ENCODE measurements at regions of chr12 and their contacts with region 1.

Region 1: DNA sequence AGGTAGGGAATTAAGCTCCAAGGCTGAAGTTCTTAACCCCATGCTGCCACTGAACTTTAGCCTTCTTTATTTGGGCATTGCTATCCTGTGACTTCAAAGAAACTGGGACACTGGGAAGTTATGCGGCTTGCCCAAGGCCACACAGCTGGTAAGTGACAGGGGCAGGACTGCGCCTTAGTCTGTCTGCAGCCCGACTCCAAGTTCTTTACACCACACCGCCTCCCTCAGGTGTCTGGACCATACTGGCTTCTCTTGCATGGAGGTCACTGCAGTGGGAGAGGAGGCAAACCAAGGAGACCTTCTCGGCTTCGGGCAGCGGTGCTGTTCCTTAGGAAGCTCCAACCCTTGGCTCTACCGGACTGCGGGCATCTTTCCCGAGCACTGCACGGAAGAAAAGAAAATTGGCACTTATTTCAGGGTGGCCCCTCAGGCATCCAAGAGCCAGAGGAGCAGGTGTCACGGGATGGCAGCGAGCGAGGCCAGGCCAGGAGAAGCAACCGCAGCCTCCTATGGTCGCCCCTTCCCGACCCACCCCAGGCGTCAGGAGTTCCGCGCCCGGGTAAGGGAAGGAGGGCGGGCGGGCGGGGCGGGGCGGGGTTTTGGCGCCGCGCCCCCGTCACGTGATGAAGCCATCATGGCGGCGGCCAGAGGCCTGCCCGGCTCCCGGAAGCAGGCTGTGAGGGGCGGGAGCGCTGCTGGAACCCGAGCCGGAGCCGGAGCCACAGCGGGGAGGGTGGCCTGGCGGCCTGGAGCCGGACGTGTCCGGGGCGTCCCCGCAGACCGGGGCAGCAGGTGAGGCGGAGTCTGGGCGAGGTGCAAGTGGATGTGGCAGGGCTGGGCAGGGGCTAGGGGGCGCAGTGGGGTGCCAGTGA is 16.4 kb upstream of the ESPL1 start:
- DNase-seq: peak; percentile 85
- ATAC-seq: peak; percentile 81
- H3K4me3 ChIP-seq: peak overlapping the region; percentile 56 to 95 (median 88)
- H3K4me3 Mint-ChIP-seq: peak overlapping the region; percentile 99
- H3K27ac ChIP-seq: peak overlapping the region; percentile 59 to 92
- H3K27ac Mint-ChIP-seq: peak overlapping the region; percentile 96
- H3K4me1 ChIP-seq: peaks cover 44 to 52% of the 10 kb centered on the region in 2 donors
- H3K4me1 Mint-ChIP-seq: peaks cover 49% of the 10 kb centered on the region
- H3K27me3 ChIP-seq: no peaks in the 10 kb centered on the region
- H3K27me3 Mint-ChIP-seq: no peaks in the 10 kb centered on the region
- CTCF ChIP-seq: peak; percentile 42

Region 2: DNA sequence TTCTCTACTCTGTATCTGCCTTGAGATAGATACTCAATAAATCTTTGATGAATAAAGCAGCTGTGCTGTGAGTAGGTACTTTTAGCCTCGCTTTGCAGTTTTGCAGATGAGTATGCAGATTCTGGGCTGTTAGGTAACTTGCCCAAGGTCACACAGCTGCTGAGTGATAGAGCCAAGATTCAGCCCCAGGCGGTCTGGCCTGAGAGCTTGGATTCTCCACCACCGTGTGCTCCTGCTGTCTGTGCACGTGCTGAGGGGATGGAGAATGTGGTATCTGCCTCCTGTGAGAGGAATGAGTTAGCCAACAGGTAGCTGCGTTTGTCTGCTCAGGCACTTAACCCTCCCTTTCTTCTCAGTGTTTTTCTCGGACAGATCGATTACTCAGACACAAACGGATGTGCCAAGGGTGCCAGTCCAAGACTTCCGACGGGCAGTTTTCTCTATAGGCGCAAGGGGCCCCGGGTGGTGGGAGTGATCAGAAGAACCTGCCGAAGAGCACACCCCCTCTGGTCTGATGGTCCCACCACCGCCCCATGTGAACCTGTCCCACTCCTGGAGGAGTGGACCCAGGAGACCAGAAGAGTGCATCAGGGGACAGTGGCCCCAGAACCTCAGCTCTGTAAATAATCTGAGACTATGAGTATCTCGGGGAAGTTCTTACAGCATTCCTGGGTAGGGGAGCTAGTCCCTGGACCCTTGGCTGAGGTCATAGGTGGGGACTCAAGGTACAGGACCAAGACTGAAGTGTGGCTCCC is 64.4 kb before region 1 on chr12:
- CTCF ChIA-PET with region 1: no interaction called
- POLR2A ChIA-PET with region 1: no interaction called
- intact Hi-C with region 1: no loop called
- DNase-seq: no peak
- ATAC-seq: no peak
- H3K4me3 ChIP-seq: no peak overlapping the region
- H3K4me3 Mint-ChIP-seq: no peak overlapping the region
- H3K27ac ChIP-seq: no peak overlapping the region
- H3K27ac Mint-ChIP-seq: peak overlapping the region; percentile 50
- H3K4me1 ChIP-seq: peaks cover 10 to 18% of the 10 kb centered on the region in 2 donors
- H3K4me1 Mint-ChIP-seq: peaks cover 35% of the 10 kb centered on the region
- H3K27me3 ChIP-seq: no peaks in the 10 kb centered on the region
- H3K27me3 Mint-ChIP-seq: no peaks in the 10 kb centered on the region
- CTCF ChIP-seq: no peak

Region 3: DNA sequence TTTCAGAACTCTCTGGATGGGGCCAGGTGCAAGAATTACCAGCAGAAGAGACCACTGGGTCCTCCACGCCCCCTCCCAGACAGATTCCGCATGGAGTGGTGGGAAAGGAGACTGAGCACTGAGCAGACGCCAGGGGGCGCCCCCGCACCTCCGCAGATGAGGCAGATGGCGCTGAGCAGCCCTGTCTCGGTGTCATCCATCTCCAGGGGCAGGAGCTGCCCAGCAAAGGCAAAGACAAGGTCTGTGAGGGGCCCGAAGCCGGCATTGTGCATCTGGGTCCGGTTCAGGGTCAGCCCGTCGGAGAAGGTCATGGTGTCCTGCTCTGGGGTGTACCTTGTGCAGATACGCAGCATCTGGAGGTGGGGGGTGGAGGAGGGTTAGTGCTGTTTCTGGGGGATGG is 38.4 kb before region 1 on chr12:
- CTCF ChIA-PET with region 1: interaction called, 84 read pairs
- POLR2A ChIA-PET with region 1: no interaction called
- intact Hi-C with region 1: no loop called
- DNase-seq: peak; percentile 87
- ATAC-seq: peak; percentile 65
- H3K4me3 ChIP-seq: no peak overlapping the region
- H3K4me3 Mint-ChIP-seq: no peak overlapping the region
- H3K27ac ChIP-seq: no peak overlapping the region
- H3K27ac Mint-ChIP-seq: peak overlapping the region; percentile 46
- H3K4me1 ChIP-seq: peaks cover 57 to 65% of the 10 kb centered on the region in 2 donors
- H3K4me1 Mint-ChIP-seq: peaks cover 70% of the 10 kb centered on the region
- H3K27me3 ChIP-seq: no peaks in the 10 kb centered on the region
- H3K27me3 Mint-ChIP-seq: no peaks in the 10 kb centered on the region
- CTCF ChIP-seq: peak; percentile 97

Region 4: DNA sequence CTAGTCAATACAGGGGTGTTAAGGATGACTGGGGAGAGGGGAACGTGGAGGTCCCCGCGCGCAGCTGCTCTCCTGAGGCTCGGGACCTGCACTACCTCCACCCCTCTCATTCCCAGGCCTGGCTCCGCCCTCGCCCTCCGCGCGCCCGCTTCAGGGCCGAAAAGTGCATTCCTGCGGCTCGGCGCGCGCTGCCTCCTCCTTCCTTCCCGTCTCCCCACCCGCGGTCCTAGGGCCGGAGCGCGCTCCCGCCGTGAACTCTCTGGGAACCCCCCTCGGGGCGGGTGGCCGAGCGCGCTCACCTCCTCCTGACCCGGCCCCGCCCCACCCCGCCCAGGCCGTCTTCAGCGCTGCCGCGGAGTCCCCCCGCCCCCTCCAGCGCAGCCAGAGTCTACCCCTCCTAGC is 30.9 kb before region 1 on chr12:
- CTCF ChIA-PET with region 1: interaction called, 84 read pairs
- POLR2A ChIA-PET with region 1: interaction called, 7 read pairs
- intact Hi-C with region 1: loop called (anchors 1 kb)
- DNase-seq: peak; percentile 92
- ATAC-seq: peak; percentile 76
- H3K4me3 ChIP-seq: peak overlapping the region; percentile 63 to 100 (median 90)
- H3K4me3 Mint-ChIP-seq: peak overlapping the region; percentile 97
- H3K27ac ChIP-seq: peak overlapping the region; percentile 93 to 95
- H3K27ac Mint-ChIP-seq: peak overlapping the region; percentile 98
- H3K4me1 ChIP-seq: peaks cover 39 to 56% of the 10 kb centered on the region in 2 donors
- H3K4me1 Mint-ChIP-seq: peaks cover 53% of the 10 kb centered on the region
- H3K27me3 ChIP-seq: no peaks in the 10 kb centered on the region
- H3K27me3 Mint-ChIP-seq: no peaks in the 10 kb centered on the region
- CTCF ChIP-seq: no peak

Region 5: GRCh38 chr12:53287741-53288216 is 36.1 kb after region 1 on chr12:
- CTCF ChIA-PET with region 1: interaction called, 14 read pairs
- POLR2A ChIA-PET with region 1: no interaction called
- intact Hi-C with region 1: no loop called
- DNase-seq: peak; percentile 85
- ATAC-seq: peak; percentile 96
- H3K4me3 ChIP-seq: no peak overlapping the region
- H3K4me3 Mint-ChIP-seq: no peak overlapping the region
- H3K27ac ChIP-seq: no peak overlapping the region
- H3K27ac Mint-ChIP-seq: peak overlapping the region; percentile 28
- H3K4me1 ChIP-seq: no peaks in the 10 kb centered on the region
- H3K4me1 Mint-ChIP-seq: peaks cover 5% of the 10 kb centered on the region
- H3K27me3 ChIP-seq: no peaks in the 10 kb centered on the region
- H3K27me3 Mint-ChIP-seq: no peaks in the 10 kb centered on the region
- CTCF ChIP-seq: peak; percentile 82

Region 6: GRCh38 chr12:53295070-53295890 is 43.6 kb after region 1 on chr12 and contains the start of gene PFDN5:
- CTCF ChIA-PET with region 1: no interaction called
- POLR2A ChIA-PET with region 1: no interaction called
- intact Hi-C with region 1: loop called (anchors 1 kb)
- DNase-seq: peak; percentile 92
- ATAC-seq: peak; percentile 90
- H3K4me3 ChIP-seq: peak within 1 kb of the TSS; percentile 64 to 96 (median 82)
- H3K4me3 Mint-ChIP-seq: peak within 1 kb of the TSS; percentile 100
- H3K27ac ChIP-seq: peak within 1 kb of the TSS; percentile 69 to 86
- H3K27ac Mint-ChIP-seq: peak within 1 kb of the TSS; percentile 99
- H3K4me1 ChIP-seq: peaks cover 26 to 39% of the 10 kb centered on the region in 2 donors
- H3K4me1 Mint-ChIP-seq: peaks cover 50% of the 10 kb centered on the region
- H3K27me3 ChIP-seq: no peaks in the 10 kb centered on the region
- H3K27me3 Mint-ChIP-seq: no peaks in the 10 kb centered on the region
- CTCF ChIP-seq: no peak
- total RNA-seq, gene PFDN5: 627 and 654 TPM in 2 replicates

Region 7: GRCh38 chr12:53733051-53733806 is 481.5 kb after region 1 on chr12:
- CTCF ChIA-PET with region 1: no interaction called
- POLR2A ChIA-PET with region 1: no interaction called
- intact Hi-C with region 1: no loop called
- DNase-seq: no peak
- ATAC-seq: no peak
- H3K4me3 ChIP-seq: no peak overlapping the region
- H3K4me3 Mint-ChIP-seq: no peak overlapping the region
- H3K27ac ChIP-seq: no peak overlapping the region
- H3K27ac Mint-ChIP-seq: no peak overlapping the region
- H3K4me1 ChIP-seq: peaks cover 2 to 5% of the 10 kb centered on the region in 2 donors
- H3K4me1 Mint-ChIP-seq: peaks cover 9% of the 10 kb centered on the region
- H3K27me3 ChIP-seq: peaks cover 0 to 43% (median 25%) of the 10 kb centered on the region in 4 experiments
- H3K27me3 Mint-ChIP-seq: peaks cover 59% of the 10 kb centered on the region
- CTCF ChIP-seq: no peak